ENCODE measurements at regions of chrX and their contacts with region 1.

Region 1: GRCh38 chrX:11143931-11144678 is 33.0 kb downstream of the HCCS start:
- DNase-seq: peak; percentile 91
- ATAC-seq: peak; percentile 88
- H3K4me3 ChIP-seq: peak overlapping the region; percentile 35; the same call in 1 of the 2 replicates
- H3K27ac ChIP-seq: no peak overlapping the region
- H3K4me1 ChIP-seq: no peaks in the 10 kb centered on the region
- H3K27me3 ChIP-seq: no peaks in the 10 kb centered on the region
- CTCF ChIP-seq: peak; percentile 68

Region 2: DNA sequence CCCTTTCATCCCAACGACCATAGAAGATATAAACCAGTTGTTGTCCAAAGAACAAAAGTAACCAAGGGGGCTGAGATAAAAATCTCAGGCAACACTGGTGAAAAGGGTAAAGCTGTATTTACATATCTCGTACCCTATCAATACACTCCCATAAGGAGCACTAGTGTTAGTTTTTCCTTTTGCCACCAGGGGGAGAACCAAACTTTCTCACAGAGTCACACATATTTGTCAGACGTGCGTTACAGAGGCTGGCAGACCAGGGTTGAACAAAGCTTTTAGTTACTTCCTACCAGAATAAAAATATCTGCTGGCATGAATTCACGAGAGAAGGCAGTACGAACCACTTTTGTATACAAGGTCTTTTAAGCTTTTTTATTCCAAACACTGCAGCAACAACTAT is 237.4 kb after region 1 on chrX:
- CTCF ChIA-PET with region 1: no interaction called
- POLR2A ChIA-PET with region 1: no interaction called
- intact Hi-C with region 1: loop called (anchors 2 kb)
- DNase-seq: peak; percentile 77
- ATAC-seq: peak; percentile 77
- H3K4me3 ChIP-seq: no peak overlapping the region
- H3K27ac ChIP-seq: no peak overlapping the region
- H3K4me1 ChIP-seq: peaks cover 39% of the 10 kb centered on the region
- H3K27me3 ChIP-seq: no peaks in the 10 kb centered on the region
- CTCF ChIP-seq: peak; percentile 71

Region 3: DNA sequence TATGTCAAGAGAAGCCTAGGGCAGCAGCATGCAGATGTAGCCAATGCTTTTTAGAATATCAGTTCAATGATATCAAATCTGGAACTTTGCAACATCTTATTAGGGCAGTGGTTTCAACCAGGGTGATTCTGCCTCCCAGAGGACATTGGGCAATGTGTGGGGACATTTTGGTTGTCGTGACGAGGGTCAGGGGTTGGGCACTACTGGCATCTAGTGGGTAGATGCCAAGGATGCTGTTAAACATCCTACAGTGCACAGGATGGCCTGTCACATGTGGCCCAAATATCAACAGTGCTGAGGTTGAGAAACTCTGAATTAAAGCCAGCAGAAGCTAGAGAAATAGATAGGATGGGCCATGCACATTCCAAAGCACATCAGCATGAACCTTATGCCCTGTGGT is 301.4 kb after region 1 on chrX:
- CTCF ChIA-PET with region 1: no interaction called
- POLR2A ChIA-PET with region 1: no interaction called
- intact Hi-C with region 1: no loop called
- DNase-seq: peak; percentile 3
- ATAC-seq: no peak
- H3K4me3 ChIP-seq: no peak overlapping the region
- H3K27ac ChIP-seq: no peak overlapping the region
- H3K4me1 ChIP-seq: no peaks in the 10 kb centered on the region
- H3K27me3 ChIP-seq: no peaks in the 10 kb centered on the region
- CTCF ChIP-seq: peak; percentile 32; the same call in 1 of the 2 replicates

Measured in PC-3 (cell line).